SK-N-SH (cell line): ENCODE measurements at regions of chr17 and their contacts with region 1.

Region 1: DNA sequence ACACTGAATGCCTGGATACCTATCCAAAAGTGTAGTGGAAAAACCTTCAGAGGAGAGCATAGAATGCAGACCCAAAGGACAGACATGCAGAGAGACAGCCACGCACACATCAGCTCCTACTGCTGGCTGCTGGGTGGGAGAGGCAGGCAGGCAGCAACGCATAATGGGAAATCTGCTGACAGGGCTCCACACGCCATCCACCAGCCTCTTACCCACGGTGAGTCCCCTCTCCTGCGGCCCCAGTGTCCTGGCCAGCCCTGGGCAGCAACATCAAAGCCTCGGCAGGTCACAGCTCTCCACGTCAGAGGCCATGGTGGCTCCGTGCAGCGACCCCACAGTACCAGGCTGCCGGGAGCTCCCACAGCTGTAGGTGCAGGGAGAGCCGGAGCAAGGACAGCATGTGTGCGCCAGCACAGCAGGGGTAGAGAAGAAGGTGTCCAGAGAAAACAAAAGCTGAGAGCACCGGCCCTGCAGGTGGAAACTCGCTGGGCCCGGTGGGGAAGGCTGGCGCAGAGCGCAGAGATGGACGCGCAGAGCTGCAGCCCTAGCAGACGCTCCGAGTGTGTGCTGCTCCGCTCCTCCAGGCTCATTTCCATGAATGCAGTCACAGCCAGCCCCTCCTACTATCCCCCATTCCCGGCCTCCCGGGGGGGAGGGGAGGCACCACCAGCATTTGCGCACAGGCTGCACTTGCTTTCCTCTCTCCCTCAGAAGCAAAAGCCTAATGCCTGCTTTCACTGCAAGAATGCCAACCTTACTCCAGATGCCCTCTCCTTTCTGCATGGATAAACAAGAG is 58.9 kb downstream of the CYTH1 start:
- DNase-seq: peak; percentile 93
- H3K4me3 ChIP-seq: peak overlapping the region in 1 of 2 experiments; percentile 46; a peak in 2 of 4 replicates
- H3K27ac ChIP-seq: peak overlapping the region in 1 of 2 experiments; percentile 92; a peak in 2 of 4 replicates
- H3K4me1 ChIP-seq: peaks cover 27 to 54% of the 10 kb centered on the region in 2 experiments
- H3K27me3 ChIP-seq: no peaks in the 10 kb centered on the region
- CTCF ChIP-seq: no peak
- EP300 ChIP-seq: peak in 1 of 2 experiments; percentile 67; a peak in 2 of 4 replicates
- RAD21 ChIP-seq: peak; percentile 34

Region 2: DNA sequence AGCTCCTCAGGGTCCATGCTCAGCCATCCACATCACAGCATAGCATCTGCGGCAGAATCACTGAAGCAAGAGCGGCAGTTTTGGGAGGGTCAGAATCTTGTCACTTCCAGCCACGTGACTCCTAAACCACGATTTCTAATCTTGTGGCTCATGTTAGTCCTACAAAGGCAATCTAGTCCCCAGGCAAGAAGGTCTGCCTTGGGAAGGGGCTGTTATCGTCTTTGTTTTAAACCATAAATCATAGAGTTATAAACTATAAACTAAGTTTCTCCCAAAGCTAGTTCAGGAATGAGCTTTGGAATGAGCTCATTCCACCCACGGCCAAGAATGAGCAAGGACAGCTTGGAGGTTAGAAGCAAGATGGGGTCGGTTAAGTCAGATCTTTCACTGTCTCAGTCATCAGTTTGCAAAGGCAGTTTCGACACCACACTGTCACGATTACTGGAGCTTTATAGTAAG is 125.2 kb before region 1 on chr17:
- CTCF ChIA-PET with region 1: no interaction called
- POLR2A ChIA-PET with region 1: no interaction called
- DNase-seq: no peak
- H3K4me3 ChIP-seq: no peak overlapping the region
- H3K27ac ChIP-seq: no peak overlapping the region
- H3K4me1 ChIP-seq: peaks cover 0 to 10% of the 10 kb centered on the region in 2 experiments
- H3K27me3 ChIP-seq: no peaks in the 10 kb centered on the region
- CTCF ChIP-seq: no peak
- EP300 ChIP-seq: no peak
- RAD21 ChIP-seq: no peak

Region 3: DNA sequence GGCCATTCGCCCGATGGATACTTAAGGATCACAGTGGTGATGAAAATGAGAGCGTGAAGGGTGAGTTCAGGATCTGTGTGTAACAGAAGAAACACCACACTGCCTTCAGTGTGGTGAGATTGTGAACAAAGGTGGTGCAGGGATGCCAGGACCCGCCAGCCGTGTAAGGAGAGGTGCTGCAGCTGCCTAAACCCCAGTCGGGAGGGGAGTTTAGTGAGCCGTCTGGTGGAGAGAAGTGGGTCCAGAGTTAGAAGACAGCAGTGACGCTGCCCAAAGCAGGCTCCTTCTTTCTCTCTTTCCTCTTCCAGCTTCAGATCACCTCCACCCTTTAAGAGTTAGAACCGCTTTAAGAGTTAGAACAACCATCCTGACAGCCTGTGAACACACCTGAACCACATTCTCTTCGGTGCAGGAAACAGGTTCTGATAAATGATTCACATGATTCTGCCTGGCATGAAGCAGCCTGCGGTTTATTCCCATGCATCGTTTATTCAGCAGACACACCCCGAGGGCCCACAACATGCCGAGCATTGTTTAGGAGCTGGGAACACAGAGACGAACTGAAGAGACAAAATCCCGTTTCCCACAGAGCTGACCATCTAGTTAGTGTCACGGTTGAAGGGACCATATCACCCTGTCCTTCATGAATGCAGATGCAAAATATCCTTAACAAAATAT is 62.0 kb before region 1 on chr17:
- CTCF ChIA-PET with region 1: no interaction called
- POLR2A ChIA-PET with region 1: no interaction called
- DNase-seq: no peak
- H3K4me3 ChIP-seq: no peak overlapping the region
- H3K27ac ChIP-seq: no peak overlapping the region
- H3K4me1 ChIP-seq: peaks cover 0 to 10% of the 10 kb centered on the region in 2 experiments; a peak in 1 of 4 replicates
- H3K27me3 ChIP-seq: no peaks in the 10 kb centered on the region
- CTCF ChIP-seq: no peak
- EP300 ChIP-seq: no peak
- RAD21 ChIP-seq: no peak

Region 4: GRCh38 chr17:78736526-78737079 is 13.4 kb after region 1 on chr17:
- CTCF ChIA-PET with region 1: interaction called, 103 read pairs
- POLR2A ChIA-PET with region 1: interaction called, 7 read pairs
- DNase-seq: no peak
- H3K4me3 ChIP-seq: no peak overlapping the region
- H3K27ac ChIP-seq: peak overlapping the region; percentile 83 to 85
- H3K4me1 ChIP-seq: peaks cover 33 to 54% of the 10 kb centered on the region in 2 experiments
- H3K27me3 ChIP-seq: no peaks in the 10 kb centered on the region
- CTCF ChIP-seq: no peak
- EP300 ChIP-seq: no peak
- RAD21 ChIP-seq: no peak

Region 5: DNA sequence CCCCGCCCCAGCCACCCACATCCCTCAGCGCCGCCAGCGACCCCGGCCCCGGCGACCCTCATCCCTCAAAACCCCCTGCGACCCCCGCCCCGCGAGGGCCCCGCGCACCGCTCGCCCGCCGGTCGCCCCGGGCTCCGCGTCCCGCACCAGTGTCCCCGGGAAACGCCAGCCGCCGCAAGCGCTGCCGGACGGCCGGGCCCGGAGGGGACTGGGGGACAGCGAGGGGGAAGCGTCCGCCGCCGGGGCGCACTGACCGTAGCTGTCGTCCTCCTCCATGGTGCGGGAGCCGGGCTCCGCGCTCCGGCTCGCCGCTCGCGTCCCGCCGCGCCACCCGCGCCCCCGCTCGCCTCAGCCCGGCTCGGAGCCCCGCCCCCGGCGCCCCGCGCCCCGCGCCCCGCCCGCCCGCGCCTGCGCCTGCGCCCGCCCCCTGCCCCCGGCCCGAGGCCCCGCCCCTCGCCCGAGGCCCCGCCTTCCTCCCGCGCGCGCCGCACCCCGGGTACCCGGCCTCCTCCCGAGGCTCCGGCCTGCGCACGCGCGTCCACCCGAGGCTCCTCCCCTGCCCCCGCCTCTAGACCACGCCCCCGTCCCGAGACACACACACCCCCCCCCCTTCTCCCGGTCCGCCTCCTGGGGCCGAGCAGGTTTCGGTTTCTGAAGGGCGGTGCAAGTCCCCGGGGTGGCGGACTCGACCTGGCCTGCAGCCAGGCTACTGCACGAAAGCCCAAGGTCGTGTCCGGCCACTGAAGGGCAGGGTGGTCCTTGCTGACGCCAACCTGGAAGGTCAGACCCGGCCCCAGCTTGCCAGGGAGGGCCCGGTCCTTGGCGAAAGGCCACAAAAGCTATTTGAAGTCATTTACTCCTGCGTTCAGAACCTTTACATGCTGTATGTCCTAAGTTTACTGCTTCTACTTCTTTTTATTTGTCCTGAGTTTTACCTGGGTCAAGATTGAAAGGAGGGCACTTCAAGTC is 59.0 kb after region 1 on chr17 and contains the start of gene CYTH1:
- CTCF ChIA-PET with region 1: no interaction called
- POLR2A ChIA-PET with region 1: interaction called, 11 read pairs
- DNase-seq: peak; percentile 100
- H3K4me3 ChIP-seq: peak within 1 kb of the TSS; percentile 63 to 91
- H3K27ac ChIP-seq: peak within 1 kb of the TSS; percentile 76 to 87
- H3K4me1 ChIP-seq: peaks cover 0 to 3% of the 10 kb centered on the region in 2 experiments; a peak in 1 of 4 replicates
- H3K27me3 ChIP-seq: no peaks in the 10 kb centered on the region
- CTCF ChIP-seq: no peak
- EP300 ChIP-seq: no peak
- RAD21 ChIP-seq: no peak
- polyA plus RNA-seq, gene CYTH1: 23.8 and 24.8 TPM in 2 replicates